Naive thymus-derived CD4-positive, alpha-beta T cell (primary cell): ENCODE measurements at regions of chr17 and their contacts with region 1.

Region 1: DNA sequence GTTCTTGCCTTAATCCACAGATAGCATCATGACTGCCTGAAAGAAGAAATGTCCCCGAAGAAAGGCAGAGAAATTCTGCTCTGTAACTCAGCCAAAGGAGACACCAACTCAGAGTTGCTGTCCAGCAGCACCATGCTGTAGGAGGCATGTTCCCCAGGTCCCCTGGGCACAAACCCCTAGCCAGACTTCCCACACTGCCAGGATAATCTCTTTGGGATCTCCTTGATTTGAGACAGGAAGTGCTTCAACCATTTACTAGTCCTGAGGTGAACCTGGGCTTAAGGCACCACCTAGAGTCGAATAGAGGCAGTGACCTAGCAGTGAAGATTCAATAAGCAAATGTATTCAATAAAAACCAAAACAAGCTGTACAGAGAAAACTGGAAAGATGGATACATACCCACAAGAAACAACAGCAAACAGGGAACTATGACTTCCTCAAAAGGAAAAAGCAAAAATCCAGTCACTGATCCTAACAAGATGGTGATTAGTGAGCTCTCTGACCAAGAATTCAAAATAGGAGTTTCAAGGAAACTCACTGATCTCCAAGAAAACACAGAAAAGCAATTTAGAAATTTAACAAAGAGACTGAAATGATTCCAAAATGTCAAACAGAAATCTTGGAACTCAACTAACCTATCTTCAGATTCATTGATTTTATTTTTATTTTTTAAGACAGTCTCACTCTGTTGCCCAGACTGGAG is 5.7 kb downstream of the OR4D2 start:
- DNase-seq: peak in 7 of 9 donors; percentile 42 to 69 (median 61)
- ATAC-seq: peak; percentile 80
- H3K4me3 ChIP-seq: no peak overlapping the region
- H3K4me3 Mint-ChIP-seq: peak overlapping the region in 9 of 10 donors; percentile 8 to 71 (median 35)
- H3K27ac ChIP-seq: no peak overlapping the region
- H3K27ac Mint-ChIP-seq: peak overlapping the region in 8 of 9 donors; percentile 2 to 96 (median 74)
- H3K4me1 ChIP-seq: peaks cover 38 to 39% of the 10 kb centered on the region in 2 donors
- H3K4me1 Mint-ChIP-seq: peaks cover 31 to 49% (median 48%) of the 10 kb centered on the region in 7 donors
- H3K27me3 ChIP-seq: no peaks in the 10 kb centered on the region
- H3K27me3 Mint-ChIP-seq: peaks cover 0 to 20% (median 2%) of the 10 kb centered on the region in 5 donors

Region 2: GRCh38 chr17:57130761-57131461 is 1041.6 kb before region 1 on chr17:
- CTCF ChIA-PET with region 1: no interaction called
- POLR2A ChIA-PET with region 1: no interaction called
- intact Hi-C with region 1: loop called in 1 of 2 experiments (anchors 2 kb)
- DNase-seq: peak; percentile 53 to 82 (median 75)
- ATAC-seq: peak; percentile 96
- H3K4me3 ChIP-seq: no peak overlapping the region
- H3K4me3 Mint-ChIP-seq: peak overlapping the region in 5 of 10 donors; percentile 14 to 53 (median 46)
- H3K27ac ChIP-seq: no peak overlapping the region
- H3K27ac Mint-ChIP-seq: no peak overlapping the region
- H3K4me1 ChIP-seq: peaks cover 0 to 6% of the 10 kb centered on the region in 2 donors
- H3K4me1 Mint-ChIP-seq: peaks cover 4 to 11% (median 8%) of the 10 kb centered on the region in 7 donors
- H3K27me3 ChIP-seq: no peaks in the 10 kb centered on the region
- H3K27me3 Mint-ChIP-seq: no peaks in the 10 kb centered on the region

Region 3: GRCh38 chr17:57892146-57892828 is 280.2 kb before region 1 on chr17:
- CTCF ChIA-PET with region 1: interaction called, 6 read pairs
- POLR2A ChIA-PET with region 1: no interaction called
- intact Hi-C with region 1: loop called in 1 of 2 experiments (anchors 1 kb)
- DNase-seq: peak; percentile 44 to 81 (median 65)
- ATAC-seq: peak; percentile 87
- H3K4me3 ChIP-seq: no peak overlapping the region
- H3K4me3 Mint-ChIP-seq: no peak overlapping the region
- H3K27ac ChIP-seq: no peak overlapping the region
- H3K27ac Mint-ChIP-seq: no peak overlapping the region
- H3K4me1 ChIP-seq: no peaks in the 10 kb centered on the region
- H3K4me1 Mint-ChIP-seq: peaks cover 0 to 9% (median 4%) of the 10 kb centered on the region in 7 donors
- H3K27me3 ChIP-seq: no peaks in the 10 kb centered on the region
- H3K27me3 Mint-ChIP-seq: peaks cover 0 to 12% (median 0%) of the 10 kb centered on the region in 5 donors

Region 4: DNA sequence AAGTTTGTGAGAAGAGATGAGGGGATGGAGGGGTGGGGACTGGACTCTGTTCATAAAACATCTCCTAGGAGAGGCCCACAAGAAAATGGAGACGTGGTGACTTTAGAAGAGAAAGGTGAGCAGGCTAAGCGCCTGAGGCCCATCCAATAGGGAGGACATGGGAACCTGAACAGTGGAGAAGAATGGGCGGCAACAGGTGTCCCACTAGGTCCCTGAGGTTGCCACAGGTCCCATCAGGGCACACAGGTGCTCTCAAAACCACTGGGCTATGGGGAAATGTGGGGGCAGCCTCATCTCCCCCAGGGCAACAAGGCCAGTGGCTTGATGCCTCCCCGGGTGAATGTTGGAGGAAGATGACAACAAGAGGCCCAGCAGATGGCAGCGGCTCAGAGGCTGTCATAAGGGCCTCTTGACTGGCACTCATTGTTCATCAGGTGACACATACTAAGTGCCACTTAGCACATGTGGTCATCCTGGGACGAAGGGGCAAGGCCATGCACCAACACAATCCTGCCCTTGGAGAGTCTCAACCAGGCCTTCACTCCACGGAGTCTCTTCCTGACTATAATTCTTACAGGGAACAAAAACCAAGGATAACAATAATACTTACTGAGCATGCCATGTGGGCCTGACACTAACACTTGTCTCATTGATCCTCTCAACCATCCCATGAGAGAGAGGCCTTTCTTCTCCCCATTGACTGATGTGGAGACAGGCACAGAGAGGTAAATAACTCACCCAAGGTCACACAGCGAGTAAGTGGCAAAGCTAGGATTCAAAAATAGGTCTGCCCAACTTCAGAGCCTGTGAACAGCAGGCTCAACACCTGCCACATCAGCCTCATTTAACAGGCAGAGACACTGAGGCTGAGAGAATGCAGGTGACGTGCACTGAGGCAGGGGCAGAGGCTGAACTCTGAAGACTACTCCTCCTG is 255.3 kb before region 1 on chr17:
- CTCF ChIA-PET with region 1: interaction called, 3 read pairs
- POLR2A ChIA-PET with region 1: no interaction called
- intact Hi-C with region 1: loop called in 1 of 2 experiments (anchors 5 kb)
- DNase-seq: peak in 5 of 9 donors; percentile 8 to 45 (median 33)
- ATAC-seq: peak; percentile 68
- H3K4me3 ChIP-seq: no peak overlapping the region
- H3K4me3 Mint-ChIP-seq: no peak overlapping the region
- H3K27ac ChIP-seq: no peak overlapping the region
- H3K27ac Mint-ChIP-seq: peak overlapping the region in 1 of 9 donors; percentile 31
- H3K4me1 ChIP-seq: no peaks in the 10 kb centered on the region
- H3K4me1 Mint-ChIP-seq: peaks cover 0 to 3% (median 0%) of the 10 kb centered on the region in 7 donors
- H3K27me3 ChIP-seq: no peaks in the 10 kb centered on the region
- H3K27me3 Mint-ChIP-seq: peaks cover 0 to 25% (median 0%) of the 10 kb centered on the region in 5 donors

Region 5: GRCh38 chr17:58121925-58122324 is 50.6 kb before region 1 on chr17:
- CTCF ChIA-PET with region 1: interaction called, 83 read pairs
- POLR2A ChIA-PET with region 1: interaction called, 10 read pairs
- intact Hi-C with region 1: loop called (anchors 1 kb)
- DNase-seq: peak in 7 of 9 donors; percentile 36 to 70 (median 56)
- ATAC-seq: peak; percentile 81
- H3K4me3 ChIP-seq: no peak overlapping the region
- H3K4me3 Mint-ChIP-seq: peak overlapping the region in 2 of 10 donors; percentile 27 to 33
- H3K27ac ChIP-seq: no peak overlapping the region
- H3K27ac Mint-ChIP-seq: peak overlapping the region in 4 of 9 donors; percentile 10 to 32 (median 12)
- H3K4me1 ChIP-seq: peaks cover 5 to 8% of the 10 kb centered on the region in 2 donors
- H3K4me1 Mint-ChIP-seq: peaks cover 2 to 28% (median 14%) of the 10 kb centered on the region in 7 donors
- H3K27me3 ChIP-seq: no peaks in the 10 kb centered on the region
- H3K27me3 Mint-ChIP-seq: peaks cover 5 to 32% (median 7%) of the 10 kb centered on the region in 5 donors

Region 6: DNA sequence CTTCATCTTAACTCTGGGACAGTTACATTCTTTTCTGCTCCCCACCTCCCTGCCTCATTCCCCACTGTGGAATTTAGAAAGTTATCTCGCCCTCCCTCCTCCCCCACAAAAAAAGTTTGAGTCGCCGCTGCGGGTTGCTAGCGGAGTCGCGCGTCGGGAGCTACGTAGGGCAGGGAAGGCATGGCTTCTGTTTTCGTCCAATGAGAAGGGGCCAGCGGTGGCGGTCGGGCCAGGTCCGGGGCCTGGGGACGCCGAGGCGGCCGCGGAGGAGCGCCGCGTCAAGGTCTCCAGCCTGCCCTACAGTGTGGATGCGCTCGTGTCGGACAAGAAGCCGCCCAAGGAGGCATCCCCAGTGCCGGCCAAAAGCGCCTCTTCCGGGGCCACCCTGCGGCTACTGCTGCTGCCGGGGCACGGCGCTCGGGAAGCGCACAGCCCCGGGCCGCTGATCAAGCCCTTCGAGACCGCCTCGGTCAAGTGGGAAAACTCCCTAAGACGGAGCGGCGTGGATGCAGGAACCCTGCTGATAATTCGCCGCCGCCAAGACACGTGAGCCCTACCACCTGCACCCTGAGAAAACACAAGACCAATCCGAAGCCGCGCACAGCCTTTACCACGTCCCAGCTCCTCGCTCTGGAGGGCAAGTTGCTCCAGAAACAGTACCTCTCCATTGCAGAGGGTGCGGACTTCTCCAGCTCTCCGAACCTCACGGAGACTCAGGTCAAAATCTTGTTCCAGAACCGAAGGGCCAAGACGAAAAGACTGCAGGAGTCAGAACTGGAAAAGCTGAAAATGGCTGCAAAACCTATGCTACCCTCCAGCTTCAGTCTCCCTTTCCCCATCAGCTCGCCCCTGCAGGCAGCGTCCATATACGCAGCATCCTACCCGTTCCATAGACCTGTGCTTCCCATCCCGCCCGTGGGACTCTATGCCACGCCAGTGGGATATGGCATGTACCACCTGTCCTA is 15.4 kb before region 1 on chr17:
- CTCF ChIA-PET with region 1: interaction called, 16 read pairs
- POLR2A ChIA-PET with region 1: interaction called, 16 read pairs
- intact Hi-C with region 1: loop called (anchors 1 to 2 kb)
- DNase-seq: peak; percentile 31 to 61 (median 55)
- ATAC-seq: peak; percentile 74
- H3K4me3 ChIP-seq: peak overlapping the region; percentile 56
- H3K4me3 Mint-ChIP-seq: peak overlapping the region; percentile 90 to 97 (median 94)
- H3K27ac ChIP-seq: peak overlapping the region; percentile 88
- H3K27ac Mint-ChIP-seq: peak overlapping the region; percentile 86 to 98 (median 93)
- H3K4me1 ChIP-seq: peaks cover 40 to 48% of the 10 kb centered on the region in 2 donors
- H3K4me1 Mint-ChIP-seq: peaks cover 41 to 86% (median 73%) of the 10 kb centered on the region in 7 donors
- H3K27me3 ChIP-seq: no peaks in the 10 kb centered on the region
- H3K27me3 Mint-ChIP-seq: peaks cover 0 to 29% (median 0%) of the 10 kb centered on the region in 5 donors

Region 7: GRCh38 chr17:58249270-58250133 is 77.0 kb after region 1 on chr17:
- CTCF ChIA-PET with region 1: no interaction called
- POLR2A ChIA-PET with region 1: no interaction called
- intact Hi-C with region 1: no loop called
- DNase-seq: peak; percentile 47 to 83 (median 74)
- ATAC-seq: peak; percentile 98
- H3K4me3 ChIP-seq: peak overlapping the region; percentile 65
- H3K4me3 Mint-ChIP-seq: peak overlapping the region; percentile 58 to 87 (median 81)
- H3K27ac ChIP-seq: no peak overlapping the region
- H3K27ac Mint-ChIP-seq: no peak overlapping the region
- H3K4me1 ChIP-seq: no peaks in the 10 kb centered on the region
- H3K4me1 Mint-ChIP-seq: peaks cover 0 to 21% (median 10%) of the 10 kb centered on the region in 7 donors
- H3K27me3 ChIP-seq: no peaks in the 10 kb centered on the region
- H3K27me3 Mint-ChIP-seq: peaks cover 3 to 50% (median 14%) of the 10 kb centered on the region in 5 donors